Naive thymus-derived CD8-positive, alpha-beta T cell (primary cell): ENCODE measurements at regions of chr16 and their contacts with region 1.

Region 1: GRCh38 chr16:28140788-28141618 is 70.8 kb downstream of the XPO6 start:
- DNase-seq: peak; percentile 26 to 95 (median 80)
- ATAC-seq: peak; percentile 76 to 79
- H3K4me3 Mint-ChIP-seq: peak overlapping the region; percentile 73 to 90 (median 85)
- H3K27ac Mint-ChIP-seq: peak overlapping the region; percentile 87 to 100 (median 98)
- H3K4me1 Mint-ChIP-seq: peaks cover 39 to 95% (median 90%) of the 10 kb centered on the region in 4 donors
- H3K27me3 Mint-ChIP-seq: no peaks in the 10 kb centered on the region

Region 2: DNA sequence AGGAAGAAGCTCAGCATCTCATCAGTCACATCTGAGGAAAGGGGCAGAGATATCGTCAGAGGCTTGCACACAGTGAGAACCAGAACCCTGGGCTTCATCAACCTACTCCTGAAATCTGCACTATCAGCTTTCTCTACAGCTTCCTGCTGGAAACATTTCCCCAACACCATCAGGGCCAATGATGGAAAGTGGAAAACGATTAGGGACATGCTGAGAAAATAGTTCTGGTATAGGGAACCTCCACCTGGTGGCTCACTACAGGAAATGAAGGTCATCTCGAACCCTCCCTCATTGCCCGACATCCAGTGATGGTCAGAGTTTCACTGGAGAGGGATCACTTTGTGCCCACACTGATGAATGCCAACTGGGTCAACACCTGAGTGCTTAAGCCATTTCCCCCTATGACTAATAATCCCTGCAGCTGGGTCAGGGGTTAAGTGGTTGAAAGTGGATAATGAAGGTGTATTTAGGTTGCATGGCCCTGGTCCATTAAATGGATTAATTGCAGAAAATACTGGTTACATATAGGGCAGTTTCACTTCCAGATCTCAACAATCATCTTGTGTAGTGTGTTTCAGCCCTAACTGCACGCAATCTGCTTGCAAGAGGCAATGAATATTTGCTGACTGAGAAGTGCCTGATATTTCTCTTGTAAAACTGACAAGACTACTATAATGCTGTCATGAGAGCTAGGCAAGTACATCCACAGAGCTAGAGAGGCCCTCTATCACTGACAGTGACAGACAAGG is 34.4 kb before region 1 on chr16:
- POLR2A ChIA-PET with region 1: no interaction called
- DNase-seq: no peak
- ATAC-seq: no peak
- H3K4me3 Mint-ChIP-seq: no peak overlapping the region
- H3K27ac Mint-ChIP-seq: peak overlapping the region in 4 of 10 donors; percentile 36 to 59 (median 52)
- H3K4me1 Mint-ChIP-seq: peaks cover 12 to 23% (median 18%) of the 10 kb centered on the region in 4 donors
- H3K27me3 Mint-ChIP-seq: no peaks in the 10 kb centered on the region

Region 3: GRCh38 chr16:28117168-28117565 is 23.8 kb before region 1 on chr16:
- POLR2A ChIA-PET with region 1: no interaction called
- DNase-seq: no peak
- ATAC-seq: no peak
- H3K4me3 Mint-ChIP-seq: no peak overlapping the region
- H3K27ac Mint-ChIP-seq: peak overlapping the region in 7 of 10 donors; percentile 2 to 81 (median 50)
- H3K4me1 Mint-ChIP-seq: peaks cover 2 to 18% (median 14%) of the 10 kb centered on the region in 4 donors
- H3K27me3 Mint-ChIP-seq: no peaks in the 10 kb centered on the region

Region 4: GRCh38 chr16:28166394-28167208 is 25.6 kb after region 1 on chr16:
- POLR2A ChIA-PET with region 1: interaction called, 18 read pairs
- DNase-seq: no peak
- ATAC-seq: no peak
- H3K4me3 Mint-ChIP-seq: peak overlapping the region in 9 of 10 donors; percentile 6 to 73 (median 49)
- H3K27ac Mint-ChIP-seq: peak overlapping the region; percentile 86 to 93 (median 91)
- H3K4me1 Mint-ChIP-seq: peaks cover 37 to 88% (median 79%) of the 10 kb centered on the region in 4 donors
- H3K27me3 Mint-ChIP-seq: no peaks in the 10 kb centered on the region

Region 5: GRCh38 chr16:28188085-28188916 is 47.3 kb after region 1 on chr16:
- POLR2A ChIA-PET with region 1: interaction called, 31 read pairs
- DNase-seq: no peak
- ATAC-seq: no peak
- H3K4me3 Mint-ChIP-seq: peak overlapping the region; percentile 60 to 83 (median 76)
- H3K27ac Mint-ChIP-seq: peak overlapping the region; percentile 77 to 97 (median 94)
- H3K4me1 Mint-ChIP-seq: peaks cover 47 to 96% (median 92%) of the 10 kb centered on the region in 4 donors
- H3K27me3 Mint-ChIP-seq: no peaks in the 10 kb centered on the region

Region 6: DNA sequence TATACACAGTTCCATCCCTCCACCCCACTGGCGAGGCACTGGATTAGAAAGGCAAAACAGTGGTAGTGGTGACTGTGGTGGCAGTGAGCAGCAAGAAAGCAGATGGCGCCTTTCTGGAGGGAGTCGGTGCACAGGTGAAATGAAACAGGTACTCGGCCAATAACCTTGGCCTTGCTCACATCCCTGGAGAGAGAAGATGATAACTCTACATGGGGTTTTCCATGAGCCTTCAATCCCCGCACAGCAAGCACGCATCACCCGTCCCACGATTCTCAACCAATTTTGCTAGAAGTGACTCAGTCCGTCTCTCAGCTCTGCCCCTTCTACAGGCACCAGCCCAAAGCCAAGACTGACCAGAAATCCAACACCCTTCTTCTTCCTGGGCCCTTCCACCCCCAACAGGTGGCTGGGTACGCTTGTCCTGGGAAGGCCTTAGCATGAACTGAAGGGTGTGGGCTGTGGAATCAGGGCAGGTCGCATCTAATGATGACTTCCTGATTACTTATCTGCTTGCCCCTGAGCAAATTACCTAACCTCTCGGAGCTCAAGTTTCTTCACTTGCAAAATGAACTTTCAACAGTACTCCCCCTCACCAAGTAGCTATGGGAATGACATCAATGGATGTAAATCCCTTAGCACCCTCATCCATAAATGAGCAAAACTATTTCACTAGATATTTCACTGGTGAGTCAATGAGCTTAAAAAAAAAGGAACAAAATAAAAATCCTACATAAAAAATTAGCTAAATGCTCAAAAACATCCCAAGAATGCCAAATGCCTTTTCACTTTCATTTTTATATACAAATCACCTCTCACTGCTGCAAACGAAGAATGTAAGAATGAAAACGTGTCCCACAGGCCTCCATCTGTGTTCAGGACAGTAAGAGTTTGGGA is 52.8 kb after region 1 on chr16:
- POLR2A ChIA-PET with region 1: interaction called, 31 read pairs
- DNase-seq: peak in 4 of 10 donors; percentile 13 to 36 (median 31)
- ATAC-seq: peak; percentile 3 to 4
- H3K4me3 Mint-ChIP-seq: peak overlapping the region; percentile 57 to 88 (median 84)
- H3K27ac Mint-ChIP-seq: peak overlapping the region; percentile 95 to 100 (median 98)
- H3K4me1 Mint-ChIP-seq: peaks cover 42 to 89% (median 82%) of the 10 kb centered on the region in 4 donors
- H3K27me3 Mint-ChIP-seq: no peaks in the 10 kb centered on the region

Region 7: GRCh38 chr16:28218104-28218503 is 77.1 kb after region 1 on chr16:
- POLR2A ChIA-PET with region 1: interaction called, 133 read pairs
- DNase-seq: peak; percentile 12 to 83 (median 66)
- ATAC-seq: peak; percentile 100
- H3K4me3 Mint-ChIP-seq: no peak overlapping the region
- H3K27ac Mint-ChIP-seq: peak overlapping the region in 9 of 10 donors; percentile 15 to 82 (median 73)
- H3K4me1 Mint-ChIP-seq: peaks cover 0 to 16% (median 2%) of the 10 kb centered on the region in 4 donors
- H3K27me3 Mint-ChIP-seq: no peaks in the 10 kb centered on the region

Region 8: DNA sequence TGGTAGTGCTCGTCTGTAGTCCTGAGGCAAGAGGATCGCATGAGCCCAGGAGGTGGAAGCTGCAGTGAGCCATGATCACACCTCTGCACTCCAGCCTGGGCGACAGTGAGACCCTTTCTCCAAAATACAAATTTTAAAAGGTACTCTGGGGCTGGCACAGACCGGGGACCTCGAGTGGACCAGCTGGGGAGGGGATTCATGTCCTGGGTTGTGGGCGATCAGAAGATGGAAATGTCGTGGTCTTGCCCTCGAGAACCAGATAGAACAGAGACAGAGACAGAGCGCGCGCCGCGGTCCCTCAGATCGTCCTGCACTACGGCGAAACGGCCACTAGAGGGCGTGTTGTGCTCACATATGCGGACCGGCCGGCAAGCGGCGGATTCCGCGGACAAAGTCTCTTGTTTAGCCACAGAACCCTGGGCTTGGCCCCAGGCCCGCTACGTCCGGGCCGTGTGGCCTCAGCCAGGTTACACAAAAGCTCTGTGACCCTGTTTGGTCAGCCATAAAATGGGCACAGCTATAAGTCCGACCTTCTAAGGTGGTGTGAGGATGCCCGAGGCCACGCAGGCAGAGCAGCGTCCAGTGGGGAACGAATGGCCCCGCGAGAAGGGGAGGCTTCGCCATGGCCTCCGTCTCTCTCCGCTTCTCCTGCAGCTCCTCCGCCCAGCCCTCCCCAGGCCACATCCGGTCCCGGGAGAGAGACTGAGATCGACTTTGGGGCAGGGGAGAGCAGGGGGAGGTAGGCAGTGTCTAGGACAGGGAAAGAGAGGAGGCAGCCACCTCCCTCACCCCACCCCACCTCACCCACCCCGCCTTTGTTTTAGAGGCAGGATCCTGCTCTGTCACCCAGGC is 136.8 kb after region 1 on chr16:
- POLR2A ChIA-PET with region 1: interaction called, 17 read pairs
- DNase-seq: peak; percentile 69 to 95 (median 84)
- ATAC-seq: peak; percentile 73 to 76
- H3K4me3 Mint-ChIP-seq: peak overlapping the region; percentile 70 to 88 (median 82)
- H3K27ac Mint-ChIP-seq: peak overlapping the region; percentile 90 to 99 (median 97)
- H3K4me1 Mint-ChIP-seq: peaks cover 32 to 62% (median 47%) of the 10 kb centered on the region in 4 donors
- H3K27me3 Mint-ChIP-seq: peaks cover 0 to 10% (median 0%) of the 10 kb centered on the region in 5 donors